T-cell (primary cell): ENCODE measurements at regions of chr3 and their contacts with region 1.

Region 1: DNA sequence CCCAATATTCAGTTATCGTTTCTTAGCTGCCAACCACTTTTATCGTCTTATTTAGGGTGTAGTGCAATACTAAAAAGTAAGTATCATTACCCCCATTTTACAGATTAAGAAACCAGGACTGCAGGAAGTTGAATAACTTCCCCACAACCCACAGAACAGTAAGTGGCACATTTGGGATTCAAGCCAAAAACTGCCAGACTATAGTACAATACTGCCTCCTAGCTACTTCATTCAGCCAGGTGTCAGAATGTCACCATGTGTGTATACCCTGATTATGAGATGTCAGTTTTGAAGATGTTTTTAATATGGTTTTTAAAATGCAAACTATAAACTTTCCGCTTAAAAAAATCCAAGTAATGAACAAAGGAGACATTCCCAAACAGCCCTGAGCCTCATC is 74.2 kb upstream of the PROK2 start:
- DNase-seq: peak in 11 of 35 experiments; percentile 3 to 73 (median 9)
- ATAC-seq: peak; percentile 43 to 82 (median 76)
- H3K4me3 ChIP-seq: no peak overlapping the region
- H3K4me3 Mint-ChIP-seq: no peak overlapping the region
- H3K27ac ChIP-seq: no peak overlapping the region
- H3K27ac Mint-ChIP-seq: no peak overlapping the region
- H3K4me1 ChIP-seq: peaks cover 0 to 5% of the 10 kb centered on the region in 2 experiments
- H3K4me1 Mint-ChIP-seq: peaks cover 10 to 12% (median 11%) of the 10 kb centered on the region in 3 donors
- H3K27me3 ChIP-seq: peaks cover 0 to 5% of the 10 kb centered on the region in 2 experiments
- H3K27me3 Mint-ChIP-seq: peaks cover 15 to 31% of the 10 kb centered on the region in 2 donors

Region 2: DNA sequence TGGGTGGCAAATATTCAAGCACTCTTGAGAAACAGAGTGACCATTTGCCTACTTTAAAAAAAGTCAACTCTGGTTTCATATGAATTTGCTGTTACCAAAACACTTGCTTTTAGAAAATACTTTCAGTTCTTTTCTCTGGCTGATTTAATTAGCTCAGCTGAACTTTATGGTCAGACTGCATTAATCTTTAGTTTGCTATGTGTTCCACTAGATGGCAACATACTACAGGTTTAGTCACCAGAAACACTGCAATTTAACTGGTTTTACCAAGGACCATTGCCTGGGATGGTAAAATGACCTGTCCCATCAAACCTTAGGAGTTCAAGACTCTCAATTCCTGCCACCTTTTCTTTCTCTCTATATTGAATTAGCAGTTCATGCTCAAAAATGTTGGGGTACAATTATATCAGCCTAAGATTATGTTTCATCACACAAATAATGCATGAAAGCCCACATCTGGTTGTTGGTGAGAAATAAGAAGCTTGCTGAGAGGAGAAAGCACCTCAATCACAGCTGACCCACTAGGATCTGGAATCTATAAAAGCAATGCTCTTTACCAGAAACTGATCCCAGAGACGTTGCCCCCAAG is 148.1 kb before region 1 on chr3:
- CTCF ChIA-PET with region 1: interaction called, 4 to 16 read pairs
- POLR2A ChIA-PET with region 1: no interaction called
- DNase-seq: peak in 1 of 35 experiments; percentile 69
- ATAC-seq: peak; percentile 59 to 73 (median 62)
- H3K4me3 ChIP-seq: no peak overlapping the region
- H3K4me3 Mint-ChIP-seq: no peak overlapping the region
- H3K27ac ChIP-seq: no peak overlapping the region
- H3K27ac Mint-ChIP-seq: peak overlapping the region; percentile 15 to 62
- H3K4me1 ChIP-seq: peaks cover 12 to 16% of the 10 kb centered on the region in 2 experiments
- H3K4me1 Mint-ChIP-seq: peaks cover 76 to 92% (median 87%) of the 10 kb centered on the region in 3 donors
- H3K27me3 ChIP-seq: no peaks in the 10 kb centered on the region
- H3K27me3 Mint-ChIP-seq: no peaks in the 10 kb centered on the region

Region 3: DNA sequence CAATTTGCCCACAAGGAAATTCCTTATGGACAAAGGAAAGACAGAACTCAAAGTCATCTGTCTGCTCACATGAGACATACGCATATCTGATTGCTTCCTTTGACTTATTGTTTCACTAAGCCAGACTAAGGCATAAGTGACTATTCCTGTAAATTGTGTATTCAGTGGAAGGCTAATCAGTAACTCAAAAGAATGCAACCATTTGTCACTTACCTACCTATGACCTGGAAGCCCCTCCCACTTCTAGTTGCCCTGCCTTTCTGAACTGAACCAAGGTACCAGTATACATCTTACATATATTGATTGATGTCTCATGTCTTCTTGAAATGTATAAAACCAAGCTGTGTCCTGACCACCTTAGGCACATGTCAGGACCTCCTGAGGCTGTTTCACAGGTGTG is 20.7 kb before region 1 on chr3:
- CTCF ChIA-PET with region 1: no interaction called
- POLR2A ChIA-PET with region 1: no interaction called
- DNase-seq: no peak
- ATAC-seq: no peak
- H3K4me3 ChIP-seq: no peak overlapping the region
- H3K4me3 Mint-ChIP-seq: no peak overlapping the region
- H3K27ac ChIP-seq: no peak overlapping the region
- H3K27ac Mint-ChIP-seq: no peak overlapping the region
- H3K4me1 ChIP-seq: no peaks in the 10 kb centered on the region
- H3K4me1 Mint-ChIP-seq: no peaks in the 10 kb centered on the region
- H3K27me3 ChIP-seq: no peaks in the 10 kb centered on the region
- H3K27me3 Mint-ChIP-seq: peaks cover 0 to 11% of the 10 kb centered on the region in 2 donors

Region 4: DNA sequence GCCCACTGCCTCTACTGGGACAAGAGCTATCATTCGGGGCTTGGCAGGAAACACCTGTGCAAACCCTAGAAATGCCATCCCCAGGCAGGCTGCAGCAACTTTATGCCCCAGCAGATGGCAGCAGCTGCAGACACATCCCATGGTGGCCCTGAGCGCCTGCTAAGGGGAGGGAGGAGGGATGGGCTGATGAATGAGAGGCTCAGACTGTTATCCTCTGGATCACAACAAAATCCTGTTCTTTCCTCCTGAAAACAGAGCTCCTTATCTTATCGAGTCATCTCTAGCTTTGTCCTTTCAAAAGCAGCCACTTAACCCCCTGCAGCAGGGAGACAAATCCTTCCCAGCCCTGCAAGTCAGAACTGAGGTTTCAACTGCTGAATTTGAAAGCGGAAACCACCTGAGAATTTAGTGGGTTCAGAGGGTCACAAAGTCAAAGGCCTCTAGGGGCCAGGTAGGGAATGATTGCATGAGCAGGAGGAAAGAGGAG is 16.4 kb after region 1 on chr3:
- CTCF ChIA-PET with region 1: interaction called, 4 to 18 read pairs
- POLR2A ChIA-PET with region 1: no interaction called
- DNase-seq: peak; percentile 46 to 83 (median 70)
- ATAC-seq: peak; percentile 95 to 99 (median 97)
- H3K4me3 ChIP-seq: no peak overlapping the region
- H3K4me3 Mint-ChIP-seq: no peak overlapping the region
- H3K27ac ChIP-seq: no peak overlapping the region
- H3K27ac Mint-ChIP-seq: no peak overlapping the region
- H3K4me1 ChIP-seq: peaks cover 0 to 3% of the 10 kb centered on the region in 2 experiments
- H3K4me1 Mint-ChIP-seq: peaks cover 13 to 18% (median 17%) of the 10 kb centered on the region in 3 donors
- H3K27me3 ChIP-seq: no peaks in the 10 kb centered on the region
- H3K27me3 Mint-ChIP-seq: peaks cover 4 to 6% of the 10 kb centered on the region in 2 donors

Region 5: DNA sequence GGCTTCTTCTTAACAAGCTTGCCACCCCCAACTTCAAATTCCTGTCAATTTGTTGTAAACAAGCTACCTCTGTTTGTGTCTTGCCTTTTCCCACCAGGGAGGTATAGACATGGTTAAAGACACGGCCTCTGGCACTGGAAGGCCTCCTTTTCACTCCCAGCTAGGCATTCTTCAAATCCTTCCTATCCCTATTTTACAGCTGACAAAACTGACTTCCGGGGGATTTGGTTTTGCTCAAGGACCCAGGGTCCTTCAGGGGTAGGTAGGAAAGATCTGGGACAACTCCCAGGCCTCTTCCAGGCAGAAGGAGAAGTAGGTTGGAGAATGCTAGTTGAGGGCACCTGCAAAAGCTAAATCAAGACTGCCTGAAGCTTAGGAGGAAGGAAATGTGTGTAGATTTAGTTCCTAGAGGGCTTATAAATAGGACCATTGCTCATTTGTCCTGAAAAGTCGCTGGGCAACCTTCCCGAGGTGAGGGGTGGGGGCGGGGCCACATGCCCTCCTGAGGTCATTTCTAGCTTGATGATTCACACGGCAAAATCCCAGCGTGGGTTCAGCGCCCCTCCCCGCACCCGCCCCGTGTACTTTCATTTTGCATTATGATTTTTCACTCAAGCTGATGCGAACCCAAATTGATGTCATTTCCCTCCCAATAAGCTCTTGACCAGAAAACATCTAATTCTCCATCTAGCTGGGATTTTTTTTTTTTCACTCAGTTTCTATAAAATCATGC is 623.6 kb after region 1 on chr3:
- CTCF ChIA-PET with region 1: interaction called in 1 of 2 experiments, 12 read pairs
- POLR2A ChIA-PET with region 1: no interaction called
- DNase-seq: peak; percentile 12 to 67 (median 38)
- ATAC-seq: peak; percentile 69 to 81 (median 72)
- H3K4me3 ChIP-seq: peak overlapping the region; percentile 19 to 49
- H3K4me3 Mint-ChIP-seq: peak overlapping the region; percentile 75 to 79 (median 76)
- H3K27ac ChIP-seq: peak overlapping the region; percentile 21
- H3K27ac Mint-ChIP-seq: peak overlapping the region; percentile 9 to 78
- H3K4me1 ChIP-seq: peaks cover 0 to 6% of the 10 kb centered on the region in 2 experiments
- H3K4me1 Mint-ChIP-seq: peaks cover 10 to 15% (median 14%) of the 10 kb centered on the region in 3 donors
- H3K27me3 ChIP-seq: no peaks in the 10 kb centered on the region
- H3K27me3 Mint-ChIP-seq: no peaks in the 10 kb centered on the region